HepG2 (cell line): ENCODE measurements at regions of chr5 and their contacts with region 1.

Region 1: GRCh38 chr5:55172051-55172899 is 702 bp downstream of the CDC20B start:
- DNase-seq: peak; percentile 80
- ATAC-seq: peak; percentile 61
- H3K4me3 ChIP-seq: peak overlapping the region; percentile 39 to 70 (median 59); a peak in 5 of 6 replicates
- H3K27ac ChIP-seq: no peak overlapping the region
- H3K4me1 ChIP-seq: peaks cover 39% of the 10 kb centered on the region
- H3K27me3 ChIP-seq: peaks cover 2 to 36% of the 10 kb centered on the region in 2 experiments; a peak in 3 of 5 replicates
- CTCF ChIP-seq: peak; percentile 88
- EP300 ChIP-seq: no peak
- POLR2A ChIP-seq: no peak
- RAD21 ChIP-seq: peak; percentile 66

Region 2: DNA sequence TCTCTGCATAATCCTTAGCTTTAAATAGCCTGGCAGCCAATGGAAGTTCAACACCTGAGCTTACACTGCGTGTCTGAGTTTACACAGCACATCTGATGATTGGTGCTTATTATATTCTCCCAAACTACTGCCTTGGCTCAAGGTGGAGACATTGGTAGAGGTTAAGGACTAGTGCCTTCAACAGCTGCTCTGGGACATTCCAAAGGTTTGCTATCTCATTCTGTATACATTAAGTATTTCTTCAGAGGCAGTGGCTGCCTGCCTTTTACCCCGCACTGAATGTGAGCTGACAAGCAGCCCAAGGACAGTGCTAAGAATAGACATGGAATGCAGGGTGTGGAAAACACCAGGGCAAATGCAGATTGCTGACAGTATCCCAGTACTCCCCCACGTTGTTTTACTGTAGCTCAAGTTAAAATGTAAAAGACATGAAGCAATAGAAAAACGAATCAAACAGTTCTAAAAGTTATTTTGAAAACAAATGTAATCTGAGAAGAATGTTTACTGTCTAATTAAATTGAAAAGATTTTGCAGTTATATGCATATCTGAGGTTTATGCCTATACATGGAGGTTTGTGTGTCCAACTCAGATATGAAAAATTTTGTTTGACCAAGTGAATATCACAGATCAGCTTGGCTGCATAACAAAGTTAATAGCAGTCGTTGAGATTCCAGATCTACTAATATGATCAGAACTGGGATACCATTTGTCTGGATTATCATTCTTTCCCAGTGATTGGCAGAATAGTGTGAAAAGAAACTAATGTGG is 715.0 kb before region 1 on chr5:
- CTCF ChIA-PET with region 1: no interaction called
- POLR2A ChIA-PET with region 1: no interaction called
- in situ Hi-C with region 1: no loop called
- intact Hi-C with region 1: no loop called
- DNase-seq: peak; percentile 6
- ATAC-seq: peak; percentile 70; the same call in 2 of the 3 replicates
- H3K4me3 ChIP-seq: no peak overlapping the region
- H3K27ac ChIP-seq: no peak overlapping the region
- H3K4me1 ChIP-seq: no peaks in the 10 kb centered on the region
- H3K27me3 ChIP-seq: peaks cover 0 to 6% of the 10 kb centered on the region in 2 experiments; a peak in 1 of 5 replicates
- CTCF ChIP-seq: no peak
- EP300 ChIP-seq: no peak
- POLR2A ChIP-seq: no peak
- RAD21 ChIP-seq: no peak

Region 3: DNA sequence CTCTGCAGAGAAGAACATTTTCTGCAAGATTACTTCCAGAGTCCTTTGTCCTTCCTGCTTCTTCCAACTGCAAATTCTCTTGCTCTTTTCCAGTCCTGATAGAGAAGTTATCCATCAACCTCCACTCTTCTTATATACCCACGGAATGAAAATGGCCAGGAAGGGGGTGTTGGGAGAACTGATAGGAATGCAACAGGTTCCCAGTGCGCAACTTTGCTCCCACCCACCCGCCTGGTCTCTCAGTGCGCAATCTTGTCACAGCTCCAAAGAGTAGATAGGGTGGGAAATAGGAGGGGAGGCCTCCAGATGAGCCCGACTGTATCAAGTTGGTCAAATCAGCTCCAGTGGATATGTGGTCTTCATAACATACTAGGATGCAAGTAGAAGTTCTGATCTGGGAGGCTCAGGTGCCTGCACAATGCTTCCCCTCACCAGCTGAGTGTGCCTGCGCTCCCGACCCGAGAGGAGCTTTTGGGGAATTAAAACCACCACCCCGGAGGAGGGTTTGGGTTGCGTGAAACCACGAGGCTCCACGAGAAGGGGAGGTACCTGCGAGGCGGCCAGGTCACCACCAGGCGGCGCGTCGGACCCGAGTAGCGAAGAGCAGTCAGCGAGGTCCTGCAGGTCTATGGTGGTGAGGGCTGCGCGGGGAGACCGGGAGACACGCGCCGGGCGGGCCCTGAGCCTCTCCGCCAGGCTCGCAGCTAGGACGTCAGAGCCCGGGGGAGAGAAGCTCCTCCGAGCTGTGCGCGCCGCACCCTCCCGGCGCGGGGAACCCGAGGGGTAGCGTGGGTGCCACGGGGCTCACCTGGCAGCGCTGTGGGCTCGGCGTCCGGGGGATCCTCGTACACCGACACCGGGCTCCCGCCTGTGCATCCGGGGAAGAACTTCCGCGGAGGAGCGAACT is 54.0 kb after region 1 on chr5:
- CTCF ChIA-PET with region 1: interaction called, 3 read pairs
- POLR2A ChIA-PET with region 1: no interaction called
- in situ Hi-C with region 1: no loop called
- intact Hi-C with region 1: loop called (anchors 2 kb)
- DNase-seq: peak; percentile 38
- ATAC-seq: peak; percentile 86
- H3K4me3 ChIP-seq: peak overlapping the region; percentile 39 to 74 (median 41); a peak in 4 of 6 replicates
- H3K27ac ChIP-seq: no peak overlapping the region
- H3K4me1 ChIP-seq: peaks cover 4% of the 10 kb centered on the region; the same call in 1 of the 2 replicates
- H3K27me3 ChIP-seq: peaks cover 1 to 60% of the 10 kb centered on the region in 2 experiments
- CTCF ChIP-seq: peak; percentile 92
- EP300 ChIP-seq: no peak
- POLR2A ChIP-seq: no peak
- RAD21 ChIP-seq: peak; percentile 69

Region 4: GRCh38 chr5:55324815-55325418 is 152.6 kb after region 1 on chr5:
- CTCF ChIA-PET with region 1: no interaction called
- POLR2A ChIA-PET with region 1: no interaction called
- in situ Hi-C with region 1: no loop called
- intact Hi-C with region 1: loop called (anchors 5 kb)
- DNase-seq: peak; percentile 49
- ATAC-seq: peak; percentile 60
- H3K4me3 ChIP-seq: no peak overlapping the region
- H3K27ac ChIP-seq: peak overlapping the region; percentile 59
- H3K4me1 ChIP-seq: peaks cover 25% of the 10 kb centered on the region
- H3K27me3 ChIP-seq: no peaks in the 10 kb centered on the region
- CTCF ChIP-seq: peak; percentile 67
- EP300 ChIP-seq: no peak
- POLR2A ChIP-seq: no peak
- RAD21 ChIP-seq: 0 out of 2 replicates have a peak, but pooled peaks have one; percentile 13

Region 5: DNA sequence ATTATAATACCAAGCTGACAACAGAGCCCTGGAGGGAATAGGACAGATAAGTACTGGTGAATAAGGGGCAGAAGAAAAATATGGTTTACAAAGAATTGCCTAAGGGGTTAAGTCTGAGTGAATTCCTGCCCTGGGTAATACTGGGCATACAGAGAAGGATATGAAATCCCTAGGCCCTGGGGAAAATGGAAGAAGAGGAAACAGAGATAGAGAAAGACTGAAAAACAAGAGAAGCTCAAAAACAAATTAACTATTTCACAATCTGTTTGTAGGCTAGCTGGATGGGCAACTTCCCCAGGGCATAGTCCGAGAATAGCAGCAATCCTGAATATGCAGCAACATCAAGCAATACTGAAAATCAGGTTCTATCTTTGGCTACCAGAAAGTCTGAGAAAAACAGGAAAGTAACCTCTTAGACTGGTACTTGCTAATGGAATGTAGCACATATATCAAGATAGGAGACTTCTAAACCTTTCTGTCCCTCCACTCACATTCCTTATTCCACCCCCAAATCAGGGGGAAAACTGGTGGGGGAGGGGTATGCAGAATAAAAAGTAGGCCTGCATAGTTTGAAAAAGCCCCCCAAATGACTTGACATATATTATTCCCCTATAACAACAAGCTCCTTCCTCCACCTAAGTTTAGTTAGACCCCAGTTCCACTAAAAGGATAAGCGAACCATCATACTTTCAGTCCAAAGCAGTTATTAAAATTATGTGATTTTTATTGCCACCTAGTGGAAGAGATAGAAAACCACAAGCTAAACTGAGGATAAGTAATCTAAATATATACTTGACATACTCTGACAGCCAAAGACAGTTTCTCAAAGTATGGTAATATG is 519.2 kb after region 1 on chr5:
- CTCF ChIA-PET with region 1: interaction called, 3 read pairs
- POLR2A ChIA-PET with region 1: no interaction called
- in situ Hi-C with region 1: loop called (anchors 5 kb)
- intact Hi-C with region 1: loop called (anchors 1 kb)
- DNase-seq: peak; percentile 63
- ATAC-seq: peak; percentile 91
- H3K4me3 ChIP-seq: peak overlapping the region in 2 of 3 experiments; percentile 22 to 25; a peak in 2 of 6 replicates
- H3K27ac ChIP-seq: peak overlapping the region; percentile 46
- H3K4me1 ChIP-seq: peaks cover 32% of the 10 kb centered on the region
- H3K27me3 ChIP-seq: no peaks in the 10 kb centered on the region; a peak in 1 of 5 replicates
- CTCF ChIP-seq: peak; percentile 65
- EP300 ChIP-seq: peak in 1 of 2 experiments; percentile 36; a peak in 1 of 4 replicates
- POLR2A ChIP-seq: no peak
- RAD21 ChIP-seq: 0 out of 2 replicates have a peak, but pooled peaks have one; percentile 38